ENCODE measurements at regions of chr9 and their contacts with region 1.

Region 1: GRCh38 chr9:14451949-14452348 is 138.0 kb upstream of the NFIB start:
- DNase-seq: no peak
- ATAC-seq: no peak
- H3K4me3 ChIP-seq: no peak overlapping the region
- H3K27ac ChIP-seq: no peak overlapping the region
- H3K4me1 ChIP-seq: no peaks in the 10 kb centered on the region
- H3K27me3 ChIP-seq: no peaks in the 10 kb centered on the region; the same call in 1 of the 2 replicates
- CTCF ChIP-seq: no peak
- POLR2A ChIP-seq: no peak
- RAD21 ChIP-seq: no peak

Region 2: GRCh38 chr9:14515571-14516198 is 63.7 kb after region 1 on chr9:
- CTCF ChIA-PET with region 1: no interaction called
- POLR2A ChIA-PET with region 1: no interaction called
- dilution Hi-C with region 1: no loop called
- in situ Hi-C with region 1: loop called (anchors 10 kb)
- intact Hi-C with region 1: no loop called
- DNase-seq: no peak
- ATAC-seq: no peak
- H3K4me3 ChIP-seq: no peak overlapping the region
- H3K27ac ChIP-seq: no peak overlapping the region
- H3K4me1 ChIP-seq: no peaks in the 10 kb centered on the region
- H3K27me3 ChIP-seq: no peaks in the 10 kb centered on the region; the same call in 1 of the 2 replicates
- CTCF ChIP-seq: no peak
- POLR2A ChIP-seq: no peak
- RAD21 ChIP-seq: no peak

Measured in IMR-90 (cell line).